ENCODE measurements at regions of chr7 and their contacts with region 1.

Region 1: GRCh38 chr7:28842769-28843295 is 115.3 kb downstream of the TRIL start:
- DNase-seq: no peak
- H3K4me3 ChIP-seq: no peak overlapping the region
- H3K27ac ChIP-seq: no peak overlapping the region
- H3K27me3 ChIP-seq: peaks cover 32% of the 10 kb centered on the region
- CTCF ChIP-seq: no peak

Region 2: DNA sequence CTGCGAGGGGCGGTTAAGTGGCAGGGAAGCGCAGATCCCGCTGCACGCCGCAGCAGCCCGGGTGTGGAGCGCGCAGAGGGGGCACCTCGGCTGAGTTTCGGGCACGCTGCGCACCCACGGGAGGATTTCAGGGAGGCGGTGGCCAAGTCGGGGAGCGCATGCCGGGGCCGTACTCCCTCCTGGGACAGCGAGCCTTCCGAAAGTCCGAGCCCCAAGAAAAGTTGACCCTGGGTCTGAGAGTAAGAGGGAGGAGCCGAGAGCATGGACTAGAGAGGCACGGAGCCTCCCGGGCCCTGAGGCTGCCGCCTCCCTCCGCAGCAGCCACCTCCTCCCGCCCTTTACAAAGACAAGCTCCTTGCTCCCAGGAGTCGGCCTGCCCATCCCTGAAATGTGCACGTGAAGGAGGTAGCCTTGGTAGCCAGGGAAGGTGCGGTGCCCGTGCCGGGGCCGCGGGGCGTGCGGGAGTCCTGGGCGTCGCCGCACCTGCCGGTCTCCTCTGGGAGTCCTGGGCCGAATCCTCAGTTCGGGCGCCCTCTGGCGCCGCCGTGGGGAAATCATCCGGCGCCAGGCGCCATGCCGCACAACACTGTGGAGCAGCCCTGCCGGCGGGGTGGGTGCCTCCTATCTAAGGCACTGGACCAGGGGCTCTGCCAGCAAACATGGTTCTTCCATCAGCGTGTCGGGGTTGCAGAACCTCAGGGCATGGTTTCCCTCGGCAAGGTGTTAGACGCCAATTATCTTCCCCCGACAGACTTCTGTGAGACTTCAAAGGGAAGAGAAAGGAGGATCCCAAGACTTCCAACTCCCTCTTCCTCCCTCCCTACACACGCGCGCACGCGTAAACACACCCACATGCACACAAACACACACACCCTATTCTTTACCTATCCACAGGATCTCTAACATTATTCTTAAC is 11.3 kb after region 1 on chr7:
- CTCF ChIA-PET with region 1: interaction called, 23 read pairs
- POLR2A ChIA-PET with region 1: no interaction called
- DNase-seq: no peak
- H3K4me3 ChIP-seq: peak overlapping the region; percentile 64
- H3K27ac ChIP-seq: no peak overlapping the region
- H3K27me3 ChIP-seq: peaks cover 21% of the 10 kb centered on the region
- CTCF ChIP-seq: peak; percentile 87

Measured in AG04450 (cell line).